PC-3 (cell line): ENCODE measurements at regions of chr3 and their contacts with region 1.

Region 1: GRCh38 chr3:107846279-107846852 is 244.5 kb downstream of the CD47 start:
- DNase-seq: peak; percentile 80
- ATAC-seq: peak; percentile 94
- H3K4me3 ChIP-seq: peak overlapping the region; percentile 59
- H3K27ac ChIP-seq: no peak overlapping the region
- H3K4me1 ChIP-seq: peaks cover 14% of the 10 kb centered on the region
- H3K27me3 ChIP-seq: no peaks in the 10 kb centered on the region
- CTCF ChIP-seq: peak; percentile 90

Region 2: DNA sequence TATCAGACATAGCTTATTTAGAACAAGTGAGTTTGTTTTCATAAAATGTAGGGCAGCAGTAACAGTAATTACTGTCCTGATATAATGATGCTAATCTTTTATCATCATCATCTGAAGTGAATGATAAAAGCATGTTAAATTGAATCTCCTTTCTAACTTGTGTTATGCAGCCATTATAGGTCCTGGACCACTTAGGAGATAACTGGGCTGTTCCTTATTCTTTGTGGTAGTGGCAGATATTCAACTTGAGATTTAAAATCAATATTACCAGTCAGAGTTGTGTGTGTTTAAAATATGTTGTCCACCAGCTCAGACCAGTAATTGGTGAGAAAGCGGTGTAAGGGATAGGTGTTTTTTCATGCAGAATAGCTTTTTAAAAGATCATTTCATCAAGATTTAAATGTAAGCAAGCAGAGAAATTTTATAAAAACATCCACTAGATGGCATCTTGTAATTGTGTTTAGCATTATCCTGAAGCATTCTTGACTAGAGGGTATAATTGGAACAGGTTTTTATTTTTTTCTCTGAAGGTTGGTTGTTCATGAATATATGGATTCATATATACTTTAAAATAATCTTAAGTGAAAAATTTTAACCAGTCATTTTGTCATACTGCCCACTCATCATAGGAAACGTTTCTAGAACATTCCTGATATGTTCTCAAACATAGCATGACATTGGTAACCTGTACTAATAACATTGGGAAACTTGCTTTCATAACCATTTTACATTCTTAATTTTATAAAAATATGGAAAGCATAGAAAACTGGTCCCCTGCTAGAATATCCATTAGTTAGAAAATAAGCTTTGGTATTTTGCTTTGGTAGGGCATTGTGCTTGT is 169.7 kb before region 1 on chr3:
- CTCF ChIA-PET with region 1: interaction called, 19 read pairs
- POLR2A ChIA-PET with region 1: no interaction called
- intact Hi-C with region 1: no loop called
- DNase-seq: peak; percentile 72
- ATAC-seq: peak; percentile 68
- H3K4me3 ChIP-seq: no peak overlapping the region
- H3K27ac ChIP-seq: no peak overlapping the region
- H3K4me1 ChIP-seq: no peaks in the 10 kb centered on the region
- H3K27me3 ChIP-seq: no peaks in the 10 kb centered on the region
- CTCF ChIP-seq: peak; percentile 76

Region 3: DNA sequence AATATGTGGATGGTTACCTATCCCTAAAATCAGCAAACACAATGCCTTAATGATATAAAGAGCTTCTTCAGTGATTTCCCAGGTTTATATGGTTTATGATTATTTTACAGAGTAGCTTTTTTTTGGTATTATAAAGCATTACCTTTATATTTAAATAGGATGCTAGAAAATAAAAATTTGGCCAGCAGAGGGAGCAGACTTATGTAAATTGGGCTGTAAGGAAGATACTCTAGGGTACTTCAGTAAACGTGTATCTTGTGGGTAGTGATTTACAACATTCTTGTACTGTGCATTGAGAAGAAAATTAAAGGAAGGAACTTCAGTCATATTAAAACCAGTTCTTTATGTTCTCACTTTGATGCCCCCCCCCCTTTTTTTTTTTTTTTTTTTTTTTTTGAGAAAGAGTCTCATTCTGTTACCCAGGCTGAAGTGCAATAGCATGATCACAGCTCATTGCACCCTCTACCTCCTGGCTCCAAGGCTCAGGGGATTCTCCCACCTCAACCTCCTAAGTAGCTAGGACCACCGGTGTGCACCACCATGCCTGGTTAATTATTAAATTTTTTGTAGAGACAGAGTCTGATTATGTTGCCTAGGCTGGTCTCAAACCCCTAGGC is 155.7 kb before region 1 on chr3:
- CTCF ChIA-PET with region 1: interaction called, 8 read pairs
- POLR2A ChIA-PET with region 1: no interaction called
- intact Hi-C with region 1: loop called (anchors 1 kb)
- DNase-seq: peak; percentile 84
- ATAC-seq: peak; percentile 77
- H3K4me3 ChIP-seq: no peak overlapping the region
- H3K27ac ChIP-seq: no peak overlapping the region
- H3K4me1 ChIP-seq: no peaks in the 10 kb centered on the region
- H3K27me3 ChIP-seq: no peaks in the 10 kb centered on the region
- CTCF ChIP-seq: peak; percentile 72

Region 4: DNA sequence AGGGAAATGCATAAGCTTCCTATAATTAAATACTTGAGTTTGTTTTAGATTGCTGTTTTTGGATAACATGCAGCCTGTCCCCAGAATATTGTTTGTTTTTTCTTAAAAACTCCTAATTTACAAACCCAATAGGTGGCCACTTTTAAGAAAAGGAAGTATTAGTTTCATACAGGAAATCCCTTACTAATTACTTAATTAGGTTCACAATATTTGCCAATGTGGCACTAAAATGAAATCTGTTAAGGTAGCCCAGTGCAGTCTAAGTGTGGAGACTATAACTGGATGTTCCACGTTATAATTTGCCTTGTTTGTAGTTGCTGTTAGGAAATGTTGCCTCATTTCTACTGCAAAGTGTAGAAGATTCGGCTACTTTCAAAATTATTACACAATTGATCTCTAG is 127.8 kb before region 1 on chr3:
- CTCF ChIA-PET with region 1: no interaction called
- POLR2A ChIA-PET with region 1: no interaction called
- intact Hi-C with region 1: no loop called
- DNase-seq: no peak
- ATAC-seq: no peak
- H3K4me3 ChIP-seq: no peak overlapping the region
- H3K27ac ChIP-seq: no peak overlapping the region
- H3K4me1 ChIP-seq: no peaks in the 10 kb centered on the region
- H3K27me3 ChIP-seq: no peaks in the 10 kb centered on the region
- CTCF ChIP-seq: no peak

Region 5: GRCh38 chr3:107753480-107753879 is 92.9 kb before region 1 on chr3:
- CTCF ChIA-PET with region 1: interaction called, 3 read pairs
- POLR2A ChIA-PET with region 1: no interaction called
- intact Hi-C with region 1: loop called (anchors 1 kb)
- DNase-seq: peak; percentile 63
- ATAC-seq: peak; percentile 50
- H3K4me3 ChIP-seq: no peak overlapping the region
- H3K27ac ChIP-seq: no peak overlapping the region
- H3K4me1 ChIP-seq: peaks cover 13% of the 10 kb centered on the region
- H3K27me3 ChIP-seq: no peaks in the 10 kb centered on the region
- CTCF ChIP-seq: peak; percentile 82

Region 6: DNA sequence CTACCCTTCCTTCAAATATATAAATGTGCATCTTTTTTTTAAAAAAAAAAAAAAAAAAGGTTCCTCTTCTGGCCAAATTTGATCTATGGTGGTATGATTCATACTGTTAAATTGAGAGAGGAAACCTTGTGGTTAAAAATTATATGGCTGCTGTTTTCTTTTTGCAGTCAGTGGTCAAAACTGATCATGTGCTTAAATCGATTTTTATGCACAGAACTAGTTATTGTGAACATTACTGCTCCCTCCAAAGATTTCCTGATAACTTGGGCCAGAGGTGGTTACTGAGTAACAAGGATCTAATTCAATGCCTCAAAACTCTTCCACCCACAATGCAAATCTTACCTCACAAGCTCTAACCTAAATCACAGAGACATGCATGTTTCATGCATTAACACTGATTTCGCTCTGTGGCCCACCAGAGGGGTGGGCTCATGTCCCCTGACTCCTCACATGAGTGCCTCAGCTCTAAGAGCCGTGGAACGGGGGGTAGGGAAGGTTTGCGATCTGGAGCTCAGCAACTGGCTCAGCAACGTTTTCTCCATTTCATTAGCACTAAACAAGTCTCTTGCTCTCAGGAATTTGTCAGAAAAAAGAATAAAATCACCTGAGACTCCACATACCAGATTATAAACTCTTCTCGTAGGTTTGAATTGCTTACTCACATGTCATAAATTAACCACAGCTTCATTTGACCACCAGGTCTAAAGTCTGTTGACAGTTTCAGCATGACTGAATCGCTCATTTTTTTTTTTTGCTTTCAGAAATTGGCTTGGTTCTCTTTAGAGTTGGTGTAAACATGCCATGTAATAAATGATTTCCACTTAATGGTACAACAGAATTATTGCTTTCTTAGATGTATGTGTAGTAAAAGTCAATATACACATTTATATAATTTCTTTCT is 35.9 kb before region 1 on chr3:
- CTCF ChIA-PET with region 1: interaction called, 6 read pairs
- POLR2A ChIA-PET with region 1: interaction called, 3 read pairs
- intact Hi-C with region 1: loop called (anchors 1 kb)
- DNase-seq: peak; percentile 75
- ATAC-seq: peak; percentile 88
- H3K4me3 ChIP-seq: peak overlapping the region; percentile 34; the same call in 1 of the 2 replicates
- H3K27ac ChIP-seq: peak overlapping the region; percentile 75
- H3K4me1 ChIP-seq: peaks cover 16% of the 10 kb centered on the region
- H3K27me3 ChIP-seq: no peaks in the 10 kb centered on the region
- CTCF ChIP-seq: no peak